MCF 10A (cell line): ENCODE measurements at regions of chr2 and their contacts with region 1.

Region 1: GRCh38 chr2:166361351-166362153 is 14.2 kb downstream of the SCN9A start:
- DNase-seq: peak; percentile 33
- H3K4me3 Mint-ChIP-seq: no peak overlapping the region
- H3K27ac Mint-ChIP-seq: peak overlapping the region; percentile 31
- H3K4me1 Mint-ChIP-seq: peaks cover 9% of the 10 kb centered on the region
- H3K27me3 Mint-ChIP-seq: peaks cover 54% of the 10 kb centered on the region
- CTCF ChIP-seq: peak; percentile 37

Region 2: DNA sequence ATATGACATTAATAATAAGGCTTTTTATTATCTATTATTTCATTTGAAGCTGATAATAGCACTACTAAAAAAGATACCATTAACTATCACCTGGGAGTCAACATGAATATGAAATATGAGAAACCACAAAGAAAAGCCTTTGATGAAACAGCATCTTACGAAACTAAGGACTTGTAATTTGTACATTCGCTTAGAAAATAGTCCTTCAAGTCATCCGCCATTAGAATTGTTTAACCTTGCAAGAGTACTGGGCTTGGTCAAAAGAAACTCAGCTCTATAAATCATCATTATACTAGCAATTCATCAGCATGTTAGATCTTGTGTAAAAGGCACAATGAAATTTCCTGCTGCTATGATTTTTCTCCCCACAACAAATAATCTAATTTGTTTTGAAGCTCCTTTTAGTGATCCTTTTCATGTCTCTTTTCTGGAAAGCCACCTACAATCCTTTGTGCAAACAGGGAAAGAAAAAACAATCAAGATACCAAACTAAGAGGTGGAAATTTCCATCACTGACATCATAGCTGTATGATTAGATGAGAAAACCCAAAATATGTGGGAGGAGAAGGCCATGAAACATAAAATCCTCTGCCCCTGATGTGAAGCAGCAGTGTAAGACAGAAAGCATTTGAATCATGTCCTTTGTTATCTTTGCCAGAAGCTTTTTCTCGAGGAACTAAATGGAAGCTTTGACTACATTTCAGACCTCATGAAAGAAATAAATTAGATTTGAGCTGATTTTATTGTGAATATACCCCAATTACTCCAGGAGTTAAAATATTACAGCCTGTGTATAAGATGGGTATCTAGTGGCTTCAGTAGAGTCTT is 17.1 kb before region 1 on chr2:
- CTCF ChIA-PET with region 1: interaction called, 11 read pairs
- POLR2A ChIA-PET with region 1: interaction called, 4 read pairs
- intact Hi-C with region 1: no loop called
- DNase-seq: no peak
- H3K4me3 Mint-ChIP-seq: no peak overlapping the region
- H3K27ac Mint-ChIP-seq: no peak overlapping the region
- H3K4me1 Mint-ChIP-seq: no peaks in the 10 kb centered on the region
- H3K27me3 Mint-ChIP-seq: peaks cover 60% of the 10 kb centered on the region
- CTCF ChIP-seq: no peak

Region 3: GRCh38 chr2:166375736-166376487 is 14.4 kb after region 1 on chr2 and contains the start of gene SCN9A:
- CTCF ChIA-PET with region 1: interaction called, 17 read pairs
- POLR2A ChIA-PET with region 1: no interaction called
- intact Hi-C with region 1: no loop called
- DNase-seq: peak; percentile 61
- H3K4me3 Mint-ChIP-seq: peak within 1 kb of the TSS; percentile 75
- H3K27ac Mint-ChIP-seq: no peak within 1 kb of the TSS
- H3K4me1 Mint-ChIP-seq: peaks cover 6% of the 10 kb centered on the region
- H3K27me3 Mint-ChIP-seq: peaks cover 63% of the 10 kb centered on the region
- CTCF ChIP-seq: peak; percentile 5
- total RNA-seq, gene SCN9A: 1.3 and 1.9 TPM in 2 replicates

Region 4: DNA sequence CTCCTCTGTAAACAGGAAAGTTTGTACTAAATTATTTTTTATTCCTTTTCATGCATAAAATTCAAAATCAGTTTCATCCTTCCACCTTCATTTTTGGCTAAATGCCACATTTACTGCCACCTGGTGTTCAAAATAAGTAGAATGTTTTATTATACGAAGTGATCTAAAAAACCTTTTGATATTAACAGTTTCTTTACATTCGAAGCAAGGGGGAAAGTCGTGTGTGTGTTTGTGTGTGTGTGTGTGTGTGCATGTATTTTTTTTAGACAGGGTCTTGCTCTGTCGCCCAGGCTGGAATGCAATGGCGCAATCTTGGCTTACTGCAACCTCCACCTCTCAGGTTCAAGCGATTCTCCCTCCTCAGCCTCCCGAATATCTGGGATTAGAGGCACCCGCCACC is 23.2 kb after region 1 on chr2:
- CTCF ChIA-PET with region 1: interaction called, 17 read pairs
- POLR2A ChIA-PET with region 1: no interaction called
- intact Hi-C with region 1: loop called (anchors 1 kb)
- DNase-seq: peak; percentile 45
- H3K4me3 Mint-ChIP-seq: no peak overlapping the region
- H3K27ac Mint-ChIP-seq: no peak overlapping the region
- H3K4me1 Mint-ChIP-seq: peaks cover 6% of the 10 kb centered on the region
- H3K27me3 Mint-ChIP-seq: peaks cover 43% of the 10 kb centered on the region
- CTCF ChIP-seq: peak; percentile 50

Region 5: DNA sequence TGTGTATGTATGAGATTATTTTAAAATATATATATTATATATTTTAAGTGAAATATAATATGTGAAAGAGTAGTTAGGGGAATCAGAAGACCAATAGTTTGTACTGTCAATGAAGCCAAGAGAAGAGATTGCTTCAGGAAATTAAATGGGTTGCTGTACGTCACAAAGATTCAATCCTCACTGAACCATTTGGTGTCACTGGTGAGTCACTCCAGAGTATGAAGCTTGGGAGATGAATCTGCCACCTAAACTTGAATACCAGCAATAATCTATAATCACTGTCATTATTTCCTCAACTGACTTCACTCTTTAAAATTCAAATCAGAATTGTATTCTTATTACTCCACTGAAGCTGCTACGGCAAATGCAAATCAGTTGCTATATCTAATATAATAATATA is 56.1 kb after region 1 on chr2:
- CTCF ChIA-PET with region 1: interaction called, 8 read pairs
- POLR2A ChIA-PET with region 1: no interaction called
- intact Hi-C with region 1: loop called (anchors 1 kb)
- DNase-seq: peak; percentile 58
- H3K4me3 Mint-ChIP-seq: no peak overlapping the region
- H3K27ac Mint-ChIP-seq: no peak overlapping the region
- H3K4me1 Mint-ChIP-seq: no peaks in the 10 kb centered on the region
- H3K27me3 Mint-ChIP-seq: peaks cover 6% of the 10 kb centered on the region
- CTCF ChIP-seq: no peak

Region 6: DNA sequence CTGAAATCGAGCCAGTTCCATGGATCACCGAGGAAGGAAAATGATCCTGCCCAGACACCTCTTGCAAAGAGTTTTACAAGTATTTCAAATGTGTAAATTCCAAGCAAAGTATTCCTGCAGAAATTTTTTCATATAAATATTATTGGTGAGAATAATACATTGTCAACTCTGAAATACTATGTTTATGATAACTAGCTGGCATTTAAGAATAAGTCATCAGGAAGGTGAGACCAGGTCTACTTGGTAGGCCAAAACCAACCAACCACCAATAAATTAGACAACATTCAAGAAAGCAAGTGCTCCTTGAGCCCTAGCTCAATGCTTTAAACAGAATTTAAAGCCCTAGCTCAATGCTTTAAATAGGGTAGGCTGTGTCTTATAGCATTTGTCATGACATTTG is 110.8 kb after region 1 on chr2:
- CTCF ChIA-PET with region 1: no interaction called
- POLR2A ChIA-PET with region 1: no interaction called
- intact Hi-C with region 1: no loop called
- DNase-seq: no peak
- H3K4me3 Mint-ChIP-seq: no peak overlapping the region
- H3K27ac Mint-ChIP-seq: no peak overlapping the region
- H3K4me1 Mint-ChIP-seq: no peaks in the 10 kb centered on the region
- H3K27me3 Mint-ChIP-seq: peaks cover 36% of the 10 kb centered on the region
- CTCF ChIP-seq: no peak

Region 7: DNA sequence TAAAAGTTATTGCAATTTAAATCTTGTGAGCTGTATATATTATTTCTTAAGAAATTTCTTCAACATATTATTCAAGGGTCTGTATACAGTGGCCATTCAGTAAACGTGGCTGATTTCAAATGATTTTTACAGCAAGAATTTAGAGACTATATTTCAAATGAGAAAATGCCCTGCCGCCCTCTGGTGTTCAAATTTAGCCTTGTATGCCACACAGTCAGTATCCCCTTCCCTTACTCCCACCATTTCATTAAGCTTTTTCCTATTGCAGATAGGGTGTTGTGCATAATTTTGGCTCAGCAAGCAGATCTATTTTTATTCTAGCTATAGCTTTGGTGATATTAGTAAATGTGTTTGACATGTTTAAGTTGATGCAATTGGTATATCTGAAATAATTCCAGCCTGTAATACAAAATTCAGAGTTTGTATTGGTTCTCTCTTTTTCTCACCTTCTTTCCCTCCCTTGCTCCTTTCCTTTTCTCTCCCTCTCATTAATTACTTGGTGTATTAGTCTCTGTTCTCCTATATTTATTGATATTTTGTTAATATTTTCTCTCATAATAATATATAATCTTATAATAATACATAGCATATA is 155.3 kb after region 1 on chr2:
- CTCF ChIA-PET with region 1: interaction called, 6 read pairs
- POLR2A ChIA-PET with region 1: no interaction called
- intact Hi-C with region 1: loop called (anchors 1 kb)
- DNase-seq: peak; percentile 44
- H3K4me3 Mint-ChIP-seq: no peak overlapping the region
- H3K27ac Mint-ChIP-seq: no peak overlapping the region
- H3K4me1 Mint-ChIP-seq: no peaks in the 10 kb centered on the region
- H3K27me3 Mint-ChIP-seq: peaks cover 85% of the 10 kb centered on the region
- CTCF ChIP-seq: peak; percentile 58